ENCODE measurements at regions of chr10 and their contacts with region 1.

Region 1: DNA sequence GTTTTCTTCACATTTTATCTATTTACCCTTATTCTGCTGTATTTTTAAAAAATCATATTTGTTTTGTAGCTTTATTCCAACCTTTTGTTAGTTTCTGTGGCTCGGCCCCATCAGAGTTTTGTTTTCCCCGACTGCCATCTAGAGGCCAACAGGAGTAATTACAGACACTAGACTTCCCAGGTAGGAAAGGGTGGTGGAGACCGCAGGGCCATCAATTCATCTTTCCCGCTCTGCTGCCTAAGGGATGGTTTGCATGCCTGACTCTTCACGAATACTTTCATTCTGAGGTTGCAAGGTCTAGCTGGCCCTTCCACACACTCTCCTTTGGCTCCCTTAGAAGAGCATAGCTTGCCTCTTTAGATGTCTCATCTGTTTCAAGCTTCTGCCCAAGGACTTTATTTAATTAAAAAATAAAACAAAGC is 38.3 kb downstream of the LYZL2 start:
- DNase-seq: peak; percentile 37
- ATAC-seq: peak; percentile 72
- H3K4me3 Mint-ChIP-seq: no peak overlapping the region
- H3K27ac Mint-ChIP-seq: no peak overlapping the region
- H3K4me1 Mint-ChIP-seq: peaks cover 25% of the 10 kb centered on the region
- H3K27me3 Mint-ChIP-seq: peaks cover 49% of the 10 kb centered on the region
- CTCF ChIP-seq: peak; percentile 70

Region 2: DNA sequence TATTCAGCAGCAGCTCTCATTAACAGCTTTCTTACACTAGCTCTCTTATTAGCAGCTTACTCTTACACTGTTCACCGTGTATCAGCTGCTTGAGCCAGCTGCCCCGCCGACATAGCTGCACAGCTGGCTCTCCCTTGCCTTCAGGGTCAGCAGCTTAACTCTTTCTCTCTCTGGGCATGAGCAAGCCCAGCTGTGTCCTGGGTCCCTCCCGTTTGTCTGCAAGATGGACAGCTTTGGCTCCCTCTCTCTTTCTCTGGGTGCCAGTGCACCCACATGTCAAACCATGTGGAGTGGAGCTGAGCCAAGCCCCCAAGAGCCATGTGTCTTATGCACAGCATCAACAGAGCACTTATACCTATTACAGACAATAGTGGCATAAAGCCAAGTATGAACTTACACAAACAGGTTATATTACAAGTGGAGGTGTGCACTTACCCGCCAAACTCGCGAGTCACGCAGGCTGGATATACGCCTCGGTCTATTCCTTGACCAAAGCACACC is 206.5 kb before region 1 on chr10:
- CTCF ChIA-PET with region 1: interaction called, 32 read pairs
- POLR2A ChIA-PET with region 1: no interaction called
- DNase-seq: peak; percentile 54
- ATAC-seq: peak; percentile 97
- H3K4me3 Mint-ChIP-seq: no peak overlapping the region
- H3K27ac Mint-ChIP-seq: no peak overlapping the region
- H3K4me1 Mint-ChIP-seq: peaks cover 18% of the 10 kb centered on the region
- H3K27me3 Mint-ChIP-seq: no peaks in the 10 kb centered on the region; the same call in 1 of the 2 replicates
- CTCF ChIP-seq: 0 out of 2 replicates have a peak, but pooled peaks have one; percentile 12

Region 3: GRCh38 chr10:30413996-30414576 is 177.2 kb before region 1 on chr10:
- CTCF ChIA-PET with region 1: interaction called, 16 read pairs
- POLR2A ChIA-PET with region 1: no interaction called
- DNase-seq: no peak
- ATAC-seq: peak; percentile 51
- H3K4me3 Mint-ChIP-seq: no peak overlapping the region
- H3K27ac Mint-ChIP-seq: no peak overlapping the region
- H3K4me1 Mint-ChIP-seq: peaks cover 8% of the 10 kb centered on the region
- H3K27me3 Mint-ChIP-seq: no peaks in the 10 kb centered on the region
- CTCF ChIP-seq: peak; percentile 40; the same call in 1 of the 2 replicates

Region 4: GRCh38 chr10:30433730-30434272 is 157.5 kb before region 1 on chr10 and contains the start of gene MAP3K8:
- CTCF ChIA-PET with region 1: interaction called, 11 read pairs
- POLR2A ChIA-PET with region 1: no interaction called
- DNase-seq: peak; percentile 87
- ATAC-seq: peak; percentile 73
- H3K4me3 Mint-ChIP-seq: peak within 1 kb of the TSS; percentile 90
- H3K27ac Mint-ChIP-seq: peak within 1 kb of the TSS; percentile 96
- H3K4me1 Mint-ChIP-seq: peaks cover 58% of the 10 kb centered on the region
- H3K27me3 Mint-ChIP-seq: peaks cover 29% of the 10 kb centered on the region
- CTCF ChIP-seq: no peak
- total RNA-seq, gene MAP3K8: 9.8 to 13.8 TPM (median 11.8 TPM) in 3 replicates

Region 5: DNA sequence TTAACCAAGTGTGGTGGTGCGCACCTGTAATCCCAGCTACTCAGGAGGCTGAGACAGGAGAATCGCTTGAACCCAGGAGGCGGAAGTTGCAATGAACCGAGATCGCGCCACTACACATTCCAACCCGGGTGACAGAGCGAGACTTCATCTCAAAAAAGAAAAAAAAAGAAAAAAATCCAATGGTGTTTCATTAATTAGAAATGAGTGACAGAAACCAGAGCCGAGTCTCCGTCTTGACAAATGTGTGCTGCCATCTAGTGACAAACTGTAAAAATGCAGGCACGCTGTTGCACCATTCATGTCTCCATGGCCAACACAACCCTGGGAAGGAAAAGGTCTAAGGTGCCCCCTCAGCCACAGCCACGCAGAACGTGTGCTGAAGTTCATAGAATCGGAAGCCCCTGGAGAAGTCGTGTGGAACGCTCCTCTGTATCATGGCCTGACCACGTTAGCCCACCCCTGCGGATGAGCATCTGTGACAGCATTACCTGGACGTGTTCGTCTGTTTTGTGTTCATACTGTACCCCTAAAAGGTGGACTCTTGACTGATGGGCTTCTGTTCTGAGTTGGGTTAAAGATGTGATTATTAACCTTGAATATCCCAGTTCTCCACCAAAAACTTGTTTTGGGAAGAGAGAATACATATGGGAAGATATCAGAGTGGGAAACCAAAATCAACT is 56.7 kb before region 1 on chr10:
- CTCF ChIA-PET with region 1: interaction called, 19 read pairs
- POLR2A ChIA-PET with region 1: no interaction called
- DNase-seq: peak; percentile 68
- ATAC-seq: peak; percentile 79
- H3K4me3 Mint-ChIP-seq: no peak overlapping the region
- H3K27ac Mint-ChIP-seq: peak overlapping the region; percentile 22; the same call in 1 of the 2 replicates
- H3K4me1 Mint-ChIP-seq: peaks cover 30% of the 10 kb centered on the region
- H3K27me3 Mint-ChIP-seq: no peaks in the 10 kb centered on the region
- CTCF ChIP-seq: peak; percentile 74

Region 6: DNA sequence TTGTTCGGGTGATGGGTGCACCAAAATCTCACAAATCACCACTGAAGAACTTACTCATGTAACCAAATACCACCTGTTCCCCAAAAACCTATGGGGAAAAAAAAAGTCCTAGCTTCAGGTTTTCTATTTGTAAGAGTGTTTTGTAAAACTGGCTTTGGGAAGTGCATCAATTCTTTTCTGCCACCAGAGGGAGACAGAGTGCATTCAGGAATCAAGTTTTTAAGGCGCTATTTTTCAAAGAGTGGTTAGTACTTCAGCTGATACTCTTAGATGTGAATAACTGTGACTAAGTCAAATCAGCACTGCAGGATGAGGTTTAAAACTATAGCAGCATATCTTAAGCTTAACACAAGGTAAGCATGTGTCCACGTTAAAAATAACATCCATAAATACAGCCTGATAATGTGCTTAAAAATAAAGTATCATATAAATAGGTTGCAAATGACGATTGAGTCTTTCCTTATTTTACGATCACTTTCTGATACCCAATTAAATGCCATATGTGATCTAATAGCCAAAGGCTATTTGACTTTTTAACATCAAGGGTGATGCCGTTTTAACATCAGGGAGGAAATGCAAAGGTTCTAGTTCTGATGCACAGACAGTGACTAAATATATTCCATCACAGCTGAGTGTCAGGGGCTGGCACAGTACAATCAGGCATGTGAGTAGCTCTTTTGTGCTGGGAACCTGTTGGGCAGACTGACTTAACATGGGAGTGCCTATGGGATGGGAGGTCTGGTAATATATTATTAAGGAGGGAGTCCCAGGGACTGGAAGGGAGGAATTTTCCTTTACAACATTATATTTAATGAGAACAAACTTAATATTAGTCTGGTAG is 48.9 kb after region 1 on chr10:
- CTCF ChIA-PET with region 1: interaction called, 12 read pairs
- POLR2A ChIA-PET with region 1: no interaction called
- DNase-seq: no peak
- ATAC-seq: no peak
- H3K4me3 Mint-ChIP-seq: no peak overlapping the region
- H3K27ac Mint-ChIP-seq: no peak overlapping the region
- H3K4me1 Mint-ChIP-seq: peaks cover 43% of the 10 kb centered on the region
- H3K27me3 Mint-ChIP-seq: no peaks in the 10 kb centered on the region
- CTCF ChIP-seq: peak; percentile 74

Measured in WTC11 (cell line).